ENCODE measurements at regions of chr3 and their contacts with region 1.

Region 1: DNA sequence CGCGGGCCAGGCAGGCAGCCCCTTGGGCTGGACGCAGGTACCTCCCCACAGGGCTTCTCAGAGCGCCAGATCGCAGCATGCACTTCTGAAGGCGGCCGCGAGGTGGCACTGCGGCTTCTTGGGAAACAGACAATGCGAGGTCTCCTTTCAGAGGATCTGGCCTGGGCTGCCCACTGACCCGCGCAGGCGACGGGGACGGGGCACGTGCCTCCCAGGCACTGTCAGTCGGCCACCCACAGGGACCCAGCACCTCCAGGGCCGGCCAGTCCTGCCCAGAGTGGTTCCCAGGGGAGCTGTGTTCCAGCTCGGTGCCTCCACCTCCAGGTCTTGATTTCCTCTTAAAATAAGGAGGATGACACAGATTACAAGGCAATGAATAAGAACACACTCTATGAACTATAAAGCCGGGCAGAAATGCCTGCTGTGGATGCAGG is 24.4 kb upstream of the TXNRD3 start:
- DNase-seq: peak; percentile 55
- H3K4me3 ChIP-seq: peak overlapping the region in 1 of 3 experiments; percentile 15
- H3K27ac ChIP-seq: no peak overlapping the region
- H3K4me1 ChIP-seq: peaks cover 5% of the 10 kb centered on the region
- H3K27me3 ChIP-seq: no peaks in the 10 kb centered on the region
- CTCF ChIP-seq: peak; percentile 90 to 95

Region 2: GRCh38 chr3:126522363-126522788 is 157.0 kb before region 1 on chr3:
- CTCF ChIA-PET with region 1: no interaction called
- dilution Hi-C with region 1: no loop called
- in situ Hi-C with region 1: no loop called
- intact Hi-C with region 1: loop called (anchors 1 kb)
- DNase-seq: peak; percentile 31
- H3K4me3 ChIP-seq: no peak overlapping the region
- H3K27ac ChIP-seq: no peak overlapping the region
- H3K4me1 ChIP-seq: peaks cover 5% of the 10 kb centered on the region
- H3K27me3 ChIP-seq: peaks cover 4% of the 10 kb centered on the region
- CTCF ChIP-seq: peak; percentile 62 to 89

Region 3: DNA sequence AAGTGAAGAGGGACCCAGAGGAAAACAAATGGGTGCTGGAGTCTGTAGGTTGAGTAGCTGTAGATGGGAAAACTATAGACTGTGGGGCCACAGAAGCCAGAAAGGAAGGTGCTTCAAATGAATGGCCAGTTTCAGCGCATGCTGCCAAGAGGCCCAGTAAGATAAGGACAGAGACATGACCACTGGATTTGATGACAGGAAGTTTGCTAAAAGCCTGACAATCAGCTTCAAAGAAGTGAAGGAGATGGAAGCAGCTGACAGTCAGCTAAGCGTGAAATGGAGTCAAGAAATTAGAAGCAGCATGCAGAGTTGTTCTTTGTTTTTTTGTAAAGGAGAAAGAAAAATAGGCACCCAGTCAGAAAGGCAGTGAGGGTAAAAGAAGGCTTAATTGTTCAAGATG is 49.3 kb before region 1 on chr3:
- CTCF ChIA-PET with region 1: no interaction called
- dilution Hi-C with region 1: no loop called
- in situ Hi-C with region 1: no loop called
- intact Hi-C with region 1: no loop called
- DNase-seq: no peak
- H3K4me3 ChIP-seq: no peak overlapping the region
- H3K27ac ChIP-seq: no peak overlapping the region
- H3K4me1 ChIP-seq: no peaks in the 10 kb centered on the region
- H3K27me3 ChIP-seq: no peaks in the 10 kb centered on the region
- CTCF ChIP-seq: no peak

Region 4: DNA sequence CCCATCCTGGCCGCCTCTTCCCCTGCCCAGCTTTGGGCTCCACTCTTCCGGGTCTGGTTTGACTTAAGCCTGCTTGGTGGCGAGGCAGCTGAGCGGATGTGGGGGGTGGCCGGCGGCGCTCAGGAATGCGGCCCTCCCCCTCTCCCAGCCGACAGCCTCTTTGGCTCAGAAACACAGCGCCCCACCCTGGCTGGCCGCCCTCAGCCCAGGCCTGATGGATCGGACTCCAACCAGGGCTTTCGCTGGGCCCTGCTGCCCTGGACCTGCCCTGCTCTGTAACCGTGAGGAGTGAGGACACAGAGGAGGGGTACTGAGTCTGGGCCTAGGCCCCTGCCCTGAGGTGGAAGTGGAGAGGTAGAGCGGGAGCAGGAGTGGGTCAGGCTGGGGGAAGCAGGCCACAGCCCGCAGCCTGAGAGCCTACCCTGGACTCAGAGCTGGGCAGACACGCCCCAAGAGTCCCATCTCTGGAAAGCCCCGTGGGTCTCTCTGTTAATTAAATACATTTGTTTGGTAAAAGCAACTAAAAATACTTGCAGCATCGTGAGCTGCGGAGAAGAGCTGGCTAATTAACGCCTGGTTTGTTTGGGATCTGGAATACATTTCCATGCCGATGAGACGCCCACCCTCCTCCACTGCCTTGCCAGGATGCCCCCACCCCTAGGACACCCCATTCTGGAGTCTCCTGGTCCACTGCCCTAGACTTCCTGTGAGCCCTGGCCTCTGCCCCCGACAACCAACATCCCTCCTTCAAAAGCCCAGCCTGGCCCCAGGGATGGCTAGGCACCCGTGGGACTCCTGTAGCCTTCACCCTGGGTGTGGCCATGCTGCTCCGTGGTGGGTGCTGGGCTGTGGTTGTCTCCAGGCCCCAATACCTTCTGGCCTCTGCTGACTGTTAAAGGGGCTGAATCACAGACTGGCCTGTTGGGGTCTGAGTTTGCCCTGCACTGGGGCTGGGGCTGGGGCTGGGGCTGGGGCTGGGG is 323.1 kb after region 1 on chr3:
- CTCF ChIA-PET with region 1: no interaction called
- dilution Hi-C with region 1: no loop called
- in situ Hi-C with region 1: loop called in 1 of 2 experiments (anchors 10 kb)
- intact Hi-C with region 1: loop called (anchors 2 kb)
- DNase-seq: peak; percentile 82
- H3K4me3 ChIP-seq: peak overlapping the region in 2 of 3 experiments; percentile 18 to 20
- H3K27ac ChIP-seq: peak overlapping the region; percentile 42
- H3K4me1 ChIP-seq: peaks cover 63% of the 10 kb centered on the region
- H3K27me3 ChIP-seq: no peaks in the 10 kb centered on the region
- CTCF ChIP-seq: peak; percentile 45 to 64

Region 5: GRCh38 chr3:127304121-127304744 is 624.9 kb after region 1 on chr3:
- CTCF ChIA-PET with region 1: no interaction called
- dilution Hi-C with region 1: no loop called
- in situ Hi-C with region 1: no loop called
- intact Hi-C with region 1: loop called (anchors 10 kb)
- DNase-seq: peak; percentile 82
- H3K4me3 ChIP-seq: no peak overlapping the region
- H3K27ac ChIP-seq: peak overlapping the region; percentile 50
- H3K4me1 ChIP-seq: peaks cover 22% of the 10 kb centered on the region
- H3K27me3 ChIP-seq: no peaks in the 10 kb centered on the region
- CTCF ChIP-seq: peak in 1 of 2 donors; percentile 41

Region 6: DNA sequence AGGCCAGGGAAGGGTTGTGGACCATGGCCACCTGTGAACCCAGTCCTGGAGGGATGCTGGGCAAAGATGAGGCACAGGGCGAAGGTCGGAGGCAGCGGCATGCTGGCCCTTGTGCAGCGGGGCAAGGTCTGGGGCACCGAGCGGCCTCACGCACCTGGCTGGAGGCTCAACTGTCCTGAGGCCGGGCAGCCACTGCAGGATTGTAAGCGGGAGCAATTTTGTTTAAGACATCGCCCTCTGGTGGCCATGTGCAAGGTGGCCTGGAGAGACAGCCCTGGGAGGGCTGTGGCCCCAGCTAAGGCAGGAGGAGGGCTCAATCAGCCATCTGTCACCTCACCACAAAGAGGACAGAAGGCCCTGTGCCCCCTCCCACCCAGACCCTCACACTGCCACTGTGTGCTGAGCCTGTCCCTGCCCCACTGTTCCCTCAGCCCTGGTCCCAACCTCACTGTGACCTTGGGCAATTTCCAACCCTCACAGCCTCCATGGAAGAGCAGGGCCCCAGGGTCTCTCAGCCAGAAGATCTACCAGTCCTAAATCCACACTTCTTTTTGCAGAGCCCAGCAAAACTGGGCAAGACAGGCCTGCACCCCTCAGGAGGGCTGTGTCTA is 865.0 kb after region 1 on chr3:
- CTCF ChIA-PET with region 1: no interaction called
- dilution Hi-C with region 1: no loop called
- in situ Hi-C with region 1: no loop called
- intact Hi-C with region 1: loop called (anchors 1 kb)
- DNase-seq: peak; percentile 43
- H3K4me3 ChIP-seq: no peak overlapping the region
- H3K27ac ChIP-seq: no peak overlapping the region
- H3K4me1 ChIP-seq: peaks cover 5% of the 10 kb centered on the region
- H3K27me3 ChIP-seq: no peaks in the 10 kb centered on the region
- CTCF ChIP-seq: peak; percentile 79 to 89

Measured in mammary epithelial cell (primary cell).